Aorta (tissue), 5 donors: ENCODE measurements at regions of chr1 and their contacts with region 1.

Region 1: GRCh38 chr1:154607609-154608396 is at the start of gene ADAR:
- DNase-seq: peak; percentile 94 to 96
- ATAC-seq: peak; percentile 95
- H3K4me3 ChIP-seq: peak within 1 kb of the TSS; percentile 76 to 96
- H3K27ac ChIP-seq: peak within 1 kb of the TSS; percentile 81 to 84
- H3K4me1 ChIP-seq: no peaks in the 10 kb centered on the region
- H3K27me3 ChIP-seq: no peaks in the 10 kb centered on the region
- total RNA-seq, gene ADAR: 125 to 138 TPM

Region 2: GRCh38 chr1:154536570-154536969 is 71.2 kb before region 1 on chr1:
- intact Hi-C with region 1: no loop called
- DNase-seq: no peak
- ATAC-seq: no peak
- H3K4me3 ChIP-seq: no peak overlapping the region
- H3K27ac ChIP-seq: no peak overlapping the region
- H3K4me1 ChIP-seq: no peaks in the 10 kb centered on the region
- H3K27me3 ChIP-seq: no peaks in the 10 kb centered on the region

Region 3: DNA sequence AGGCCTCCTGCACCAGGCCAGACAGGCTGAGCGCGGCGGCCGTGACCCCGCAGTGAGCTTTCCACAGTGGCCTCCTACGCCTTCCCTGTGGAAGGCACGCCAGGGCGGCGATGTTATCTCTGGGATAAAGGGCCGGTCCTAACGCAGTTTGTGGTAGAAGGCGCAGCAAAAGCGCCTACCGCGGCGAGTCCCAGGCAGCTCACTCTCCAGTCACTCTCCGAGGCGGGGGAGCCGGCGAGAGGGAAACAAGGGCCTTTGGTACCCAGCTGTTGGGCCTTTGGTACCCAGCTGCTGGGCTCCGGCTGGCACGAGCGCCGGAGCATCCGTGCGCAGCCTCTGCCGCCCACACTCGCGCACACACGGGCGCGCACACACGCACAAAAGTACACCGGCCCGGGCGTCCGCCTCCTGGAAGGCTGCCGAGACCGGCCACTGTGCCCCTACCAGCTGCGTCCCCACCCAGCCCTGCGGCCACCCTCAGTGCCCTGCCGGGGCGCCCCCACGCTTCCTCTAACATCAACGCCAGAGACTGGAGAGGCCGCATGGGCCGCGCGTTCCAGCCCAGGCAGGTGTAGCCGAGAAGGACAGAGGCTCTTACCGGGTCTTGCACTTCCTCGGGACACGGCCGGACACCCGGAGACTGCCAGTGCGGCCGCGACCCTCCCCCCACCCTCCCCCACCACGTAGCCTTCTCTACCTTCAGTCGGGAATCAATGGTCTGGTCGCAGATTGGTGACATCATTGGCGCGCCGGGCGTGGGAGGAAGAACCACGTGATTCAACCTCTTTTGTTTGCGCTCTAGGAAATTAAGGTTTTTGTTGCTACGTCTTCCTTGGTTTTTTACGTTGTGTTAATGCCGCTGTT is 19.7 kb after region 1 on chr1:
- intact Hi-C with region 1: loop called in 1 of 2 experiments (anchors 2 kb)
- DNase-seq: peak; percentile 94 to 97
- ATAC-seq: peak; percentile 93
- H3K4me3 ChIP-seq: peak overlapping the region; percentile 67 to 84
- H3K27ac ChIP-seq: peak overlapping the region; percentile 72 to 89
- H3K4me1 ChIP-seq: peaks cover 0 to 4% of the 10 kb centered on the region in 2 donors
- H3K27me3 ChIP-seq: no peaks in the 10 kb centered on the region